ENCODE measurements at regions of chr12 and their contacts with region 1.

Region 1: DNA sequence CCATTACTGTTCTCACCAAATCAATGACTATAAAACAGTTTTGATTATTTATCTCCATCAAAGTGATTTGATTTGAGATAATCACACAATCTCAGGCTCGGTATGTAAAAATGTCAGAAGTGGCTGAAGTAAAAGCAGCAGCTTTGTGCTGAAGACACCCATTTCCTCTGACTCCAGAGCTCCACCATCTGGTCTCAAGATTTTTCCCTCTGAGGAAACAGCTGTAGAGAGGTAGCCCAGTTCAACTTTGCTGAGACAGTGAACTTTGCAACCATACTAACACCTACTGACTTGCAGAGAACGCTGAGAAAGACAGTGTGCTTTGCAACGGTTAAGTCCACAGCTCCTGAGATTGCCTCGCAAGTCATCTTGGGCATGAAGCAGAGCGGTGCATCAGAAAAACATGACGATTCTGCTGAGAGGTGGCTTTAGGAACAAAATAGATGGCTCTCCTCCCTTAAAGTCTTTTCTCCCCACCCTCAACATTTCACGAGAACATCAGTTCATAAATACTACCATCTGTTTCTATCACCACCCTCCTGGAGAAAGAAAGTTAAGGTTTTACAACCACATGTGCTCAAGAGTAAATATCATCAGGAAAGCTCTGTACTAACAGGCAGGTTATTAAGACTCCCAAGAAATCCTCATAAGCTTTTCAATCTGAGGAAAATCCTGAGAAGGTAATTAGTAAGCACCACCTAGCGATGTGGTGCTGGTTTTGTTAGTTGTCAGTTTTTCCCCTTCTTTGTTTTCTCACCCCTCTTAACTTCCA is 34.8 kb downstream of the HIGD1C start:
- H3K4me3 ChIP-seq: no peak overlapping the region
- H3K27ac ChIP-seq: no peak overlapping the region; the same call in 1 of the 2 replicates
- H3K4me1 ChIP-seq: no peaks in the 10 kb centered on the region
- CTCF ChIP-seq: peak; percentile 58

Region 2: DNA sequence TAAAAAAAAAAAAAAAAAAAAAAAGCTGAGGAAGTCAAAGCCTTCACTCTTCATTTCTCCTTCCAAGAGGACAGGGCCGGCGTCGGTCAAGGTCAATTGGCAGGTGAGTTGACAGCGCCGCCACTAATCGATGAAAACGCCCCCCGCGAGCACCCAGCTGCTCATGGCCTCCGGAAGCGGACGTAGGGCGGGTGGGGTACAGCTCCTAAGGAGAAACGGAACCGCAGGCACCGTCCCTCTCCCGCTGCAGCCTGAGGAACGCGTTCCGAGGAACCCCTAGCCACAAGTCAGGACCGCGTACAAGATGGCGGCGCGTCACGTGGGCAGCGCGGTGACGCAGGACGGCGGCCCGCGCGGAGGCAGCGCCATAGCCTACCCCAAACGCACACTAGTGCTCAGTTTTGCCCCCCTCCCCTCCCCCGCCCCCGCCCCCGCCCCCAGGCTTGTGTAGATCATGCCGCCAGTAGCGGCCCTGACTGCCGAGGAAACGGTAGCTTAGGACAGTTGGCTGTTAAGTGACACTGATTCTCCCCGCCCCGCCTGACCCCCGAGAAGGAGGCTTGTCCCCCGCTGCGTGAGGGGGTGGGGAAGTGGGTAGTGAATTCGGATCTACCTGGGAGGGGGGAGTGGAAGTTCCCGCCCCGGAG is 223.4 kb before region 1 on chr12 and contains the start of gene ATF1:
- CTCF ChIA-PET with region 1: interaction called, 22 read pairs
- POLR2A ChIA-PET with region 1: interaction called, 10 read pairs
- H3K4me3 ChIP-seq: peak within 1 kb of the TSS; percentile 93
- H3K27ac ChIP-seq: peak within 1 kb of the TSS; percentile 94
- H3K4me1 ChIP-seq: peaks cover 10% of the 10 kb centered on the region; the same call in 1 of the 2 replicates
- CTCF ChIP-seq: 0 out of 2 replicates have a peak, but pooled peaks have one; percentile 22